Dorsolateral prefrontal cortex (tissue), 120 donors: ENCODE measurements at regions of chr6 and their contacts with region 1.

Region 1: GRCh38 chr6:109009236-109009961 is 85.2 kb downstream of the SESN1 start:
- DNase-seq: peak; percentile 88 to 97 (median 94)
- H3K4me3 ChIP-seq: peak overlapping the region; percentile 67 to 99 (median 93)
- H3K27ac ChIP-seq: peak overlapping the region; percentile 90 to 99 (median 97)
- H3K27me3 ChIP-seq: no peaks in the 10 kb centered on the region
- CTCF ChIP-seq: peak in 37 of 56 donors; percentile 14 to 60 (median 35)

Region 2: DNA sequence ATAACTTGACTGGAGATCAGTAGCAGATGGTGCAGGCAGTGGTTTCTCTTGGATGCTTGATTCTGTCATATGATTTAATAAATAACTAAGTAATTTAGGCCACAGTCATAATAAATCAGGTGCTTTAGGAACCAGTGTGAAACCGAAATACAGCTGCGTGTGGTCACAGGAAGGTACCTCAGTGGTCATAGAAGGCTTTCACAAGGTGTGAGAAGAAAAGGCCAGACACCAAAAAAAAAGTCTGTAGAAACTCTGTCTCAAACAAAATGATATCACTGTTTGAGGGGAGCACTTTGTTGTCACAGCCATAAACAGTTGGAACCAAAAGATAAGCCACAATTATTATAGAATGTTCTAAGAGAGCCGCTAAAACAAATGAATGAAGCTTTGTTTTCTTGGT is 104.7 kb before region 1 on chr6:
- intact Hi-C with region 1: loop called in 1 of 2 experiments (anchors 10 kb)
- DNase-seq: no peak
- H3K4me3 ChIP-seq: peak overlapping the region in 1 of 59 donors; percentile 2
- H3K27ac ChIP-seq: peak overlapping the region in 33 of 59 donors; percentile 2 to 76 (median 34)
- H3K27me3 ChIP-seq: no peaks in the 10 kb centered on the region
- CTCF ChIP-seq: no peak

Region 3: DNA sequence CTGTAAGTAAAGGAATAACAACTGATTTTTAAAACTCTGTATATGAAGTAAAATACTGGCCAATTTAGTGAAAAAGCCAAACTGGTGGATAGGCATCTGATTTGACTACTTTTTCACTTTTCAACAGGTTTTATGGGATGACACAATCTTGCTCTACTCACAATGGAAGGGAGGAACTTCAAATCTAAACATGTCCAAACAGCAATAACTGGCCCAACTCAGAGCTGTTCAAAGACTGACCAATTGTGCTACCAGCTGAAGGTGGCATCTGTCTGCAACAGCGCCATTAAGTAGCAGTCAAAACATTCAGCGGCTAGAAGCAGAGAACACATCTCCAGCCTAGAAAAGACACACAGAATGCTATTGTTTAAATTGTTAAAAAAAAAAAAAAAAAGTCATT is 40.6 kb after region 1 on chr6:
- intact Hi-C with region 1: loop called (anchors 2 to 10 kb)
- DNase-seq: peak in 3 of 10 donors; percentile 39 to 66 (median 52)
- H3K4me3 ChIP-seq: peak overlapping the region in 6 of 59 donors; percentile 2 to 25 (median 6)
- H3K27ac ChIP-seq: peak overlapping the region in 40 of 59 donors; percentile 1 to 82 (median 49)
- H3K27me3 ChIP-seq: no peaks in the 10 kb centered on the region
- CTCF ChIP-seq: peak in 23 of 56 donors; percentile 8 to 52 (median 30)

Region 4: GRCh38 chr6:109059571-109060021 is 50.2 kb after region 1 on chr6:
- intact Hi-C with region 1: loop called in 1 of 2 experiments (anchors 10 kb)
- DNase-seq: no peak
- H3K4me3 ChIP-seq: peak overlapping the region in 8 of 59 donors; percentile 2 to 33 (median 6)
- H3K27ac ChIP-seq: peak overlapping the region in 26 of 59 donors; percentile 1 to 59 (median 32)
- H3K27me3 ChIP-seq: no peaks in the 10 kb centered on the region
- CTCF ChIP-seq: peak in 49 of 56 donors; percentile 7 to 53 (median 36)

Region 5: DNA sequence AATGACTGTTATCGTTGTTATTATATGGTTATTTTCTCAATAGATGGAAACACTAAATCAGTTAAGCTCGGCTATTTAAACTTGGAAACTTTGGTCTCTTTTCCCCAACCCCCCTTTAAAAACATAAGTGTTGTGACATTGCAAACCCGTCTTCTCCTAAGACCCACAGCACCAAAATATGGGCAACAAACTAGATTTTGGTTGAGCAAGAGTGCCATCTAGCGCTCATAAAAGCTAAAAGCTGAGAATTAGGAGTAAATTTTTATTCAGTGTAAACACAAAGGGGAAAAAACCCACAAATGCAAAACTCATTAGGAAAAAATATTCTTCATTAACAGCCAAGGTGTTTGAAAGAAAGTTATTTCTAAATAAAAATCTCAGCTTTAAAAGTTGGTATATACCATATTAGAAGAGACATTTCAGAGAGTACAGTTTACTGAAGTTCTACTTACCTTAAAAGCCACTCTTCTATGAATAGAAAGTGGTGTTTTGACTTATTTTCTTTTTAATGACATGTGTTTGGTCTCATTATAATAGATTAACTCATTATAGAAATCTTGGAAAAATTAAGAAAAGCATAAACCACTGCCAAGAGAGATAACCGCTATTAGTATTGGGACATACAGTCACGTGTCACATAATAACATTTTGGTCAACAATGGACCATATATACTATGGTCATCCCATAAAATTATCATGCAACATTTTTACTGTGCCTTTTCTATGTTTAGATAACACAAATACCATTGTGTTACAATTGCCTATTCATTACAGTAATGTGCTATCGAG is 64.1 kb after region 1 on chr6:
- intact Hi-C with region 1: loop called in 1 of 2 experiments (anchors 5 kb)
- DNase-seq: peak in 2 of 10 donors; percentile 45 to 48
- H3K4me3 ChIP-seq: peak overlapping the region in 8 of 59 donors; percentile 3 to 30 (median 6)
- H3K27ac ChIP-seq: peak overlapping the region in 1 of 59 donors; percentile 39
- H3K27me3 ChIP-seq: no peaks in the 10 kb centered on the region
- CTCF ChIP-seq: peak; percentile 60 to 91 (median 75)

Region 6: DNA sequence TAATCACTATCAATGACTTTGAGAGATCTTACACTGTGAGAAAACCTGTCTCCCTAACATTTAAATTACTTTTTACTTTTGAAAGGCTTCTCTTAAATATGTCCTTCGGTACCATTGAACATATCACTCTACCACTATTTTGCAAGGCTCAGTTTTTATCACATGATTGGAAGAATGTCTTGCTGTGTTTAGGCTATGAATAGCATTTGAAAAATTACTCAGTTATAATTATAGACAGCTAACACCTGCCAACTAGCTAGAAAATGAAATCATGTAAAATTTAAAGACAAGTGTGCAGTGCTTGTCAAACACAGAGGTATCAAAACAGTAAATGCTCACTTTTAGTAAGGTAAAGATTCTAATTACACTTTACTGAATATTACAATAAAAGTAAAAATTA is 74.3 kb after region 1 on chr6:
- intact Hi-C with region 1: no loop called
- DNase-seq: no peak
- H3K4me3 ChIP-seq: peak overlapping the region in 2 of 59 donors; percentile 2 to 5
- H3K27ac ChIP-seq: peak overlapping the region in 6 of 59 donors; percentile 9 to 38 (median 19)
- H3K27me3 ChIP-seq: no peaks in the 10 kb centered on the region
- CTCF ChIP-seq: no peak

Region 7: GRCh38 chr6:109095027-109095834 is 85.8 kb after region 1 on chr6 and contains the start of gene CEP57L1:
- intact Hi-C with region 1: loop called in 1 of 2 experiments (anchors 10 kb)
- DNase-seq: peak; percentile 92 to 98 (median 96)
- H3K4me3 ChIP-seq: peak within 1 kb of the TSS; percentile 58 to 99 (median 86)
- H3K27ac ChIP-seq: peak within 1 kb of the TSS; percentile 89 to 100 (median 98)
- H3K27me3 ChIP-seq: no peaks in the 10 kb centered on the region
- CTCF ChIP-seq: peak in 20 of 56 donors; percentile 4 to 46 (median 18)
- total RNA-seq, gene CEP57L1: 14.7 to 38.7 (median 24.8) TPM

Region 8: GRCh38 chr6:109139109-109139508 is 129.7 kb after region 1 on chr6:
- intact Hi-C with region 1: no loop called
- DNase-seq: no peak
- H3K4me3 ChIP-seq: no peak overlapping the region
- H3K27ac ChIP-seq: no peak overlapping the region
- H3K27me3 ChIP-seq: no peaks in the 10 kb centered on the region
- CTCF ChIP-seq: no peak